HAP-1 (cell line): ENCODE measurements at regions of chr14 and their contacts with region 1.

Region 1: DNA sequence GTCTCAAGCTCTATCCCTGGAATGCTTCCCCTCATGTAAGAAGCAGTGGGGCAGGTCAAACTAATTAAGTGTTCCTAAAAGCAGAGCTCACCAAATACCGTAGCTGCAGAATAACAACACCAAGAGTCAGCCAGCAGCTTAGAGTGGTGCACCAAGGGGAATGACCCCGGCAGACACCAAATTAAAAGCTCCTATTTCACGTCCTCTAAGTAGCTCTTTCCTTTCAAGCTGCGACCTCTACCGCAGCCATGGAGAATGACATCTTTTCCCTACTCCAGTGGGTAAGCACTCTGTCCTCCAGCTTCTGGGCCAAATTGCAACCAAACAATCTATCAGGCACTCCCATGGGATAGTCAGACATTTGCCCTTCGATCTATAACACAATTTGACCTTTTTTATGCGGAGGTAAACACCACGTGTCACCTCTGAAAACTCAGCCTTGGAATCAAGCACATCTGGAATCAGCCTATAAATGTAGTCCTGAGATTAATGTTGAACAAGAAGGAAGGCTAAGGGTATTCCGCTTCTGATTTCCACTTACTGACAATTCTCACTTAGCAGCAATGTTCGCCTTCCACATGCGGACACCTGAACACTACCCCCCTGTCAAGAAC is 67.6 kb upstream of the CDKN3 start:
- DNase-seq: peak; percentile 68 to 78
- H3K4me3 ChIP-seq: no peak overlapping the region
- H3K4me1 ChIP-seq: peaks cover 4% of the 10 kb centered on the region
- H3K27me3 ChIP-seq: peaks cover 6% of the 10 kb centered on the region

Region 2: DNA sequence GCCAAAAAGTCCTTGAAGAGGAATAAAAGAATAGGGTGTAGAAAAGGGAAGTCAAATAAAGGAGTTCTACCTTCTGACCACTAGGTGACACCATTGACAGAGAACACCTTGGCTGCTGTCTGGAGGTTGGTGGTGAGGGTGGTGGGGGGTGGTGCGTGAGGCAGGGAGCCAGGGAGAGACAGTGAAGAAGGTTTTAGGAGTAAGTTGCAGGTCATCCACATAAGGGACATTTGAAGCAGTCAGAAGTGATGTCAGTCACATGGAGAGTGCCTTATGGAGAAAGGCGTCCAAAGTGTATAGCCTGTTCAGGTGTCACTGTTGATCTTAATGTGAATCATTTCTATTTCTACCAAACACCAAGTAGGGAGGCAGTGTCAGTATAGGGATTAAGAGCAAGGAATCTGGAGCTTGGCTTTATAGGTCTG is 896.8 kb before region 1 on chr14:
- in situ Hi-C with region 1: loop called (anchors 25 kb)
- DNase-seq: peak; percentile 40 to 49
- H3K4me3 ChIP-seq: no peak overlapping the region
- H3K4me1 ChIP-seq: no peaks in the 10 kb centered on the region
- H3K27me3 ChIP-seq: peaks cover 11% of the 10 kb centered on the region; the same call in 1 of the 2 replicates

Region 3: GRCh38 chr14:53539489-53540126 is 789.6 kb before region 1 on chr14:
- in situ Hi-C with region 1: loop called (anchors 25 kb)
- DNase-seq: peak; percentile 61 to 85
- H3K4me3 ChIP-seq: no peak overlapping the region
- H3K4me1 ChIP-seq: no peaks in the 10 kb centered on the region
- H3K27me3 ChIP-seq: no peaks in the 10 kb centered on the region

Region 4: GRCh38 chr14:54108481-54109471 is 220.4 kb before region 1 on chr14:
- in situ Hi-C with region 1: no loop called
- DNase-seq: no peak
- H3K4me3 ChIP-seq: no peak overlapping the region
- H3K4me1 ChIP-seq: no peaks in the 10 kb centered on the region
- H3K27me3 ChIP-seq: peaks cover 4% of the 10 kb centered on the region; the same call in 1 of the 2 replicates

Region 5: GRCh38 chr14:54411371-54411770 is 82.2 kb after region 1 on chr14:
- in situ Hi-C with region 1: no loop called
- DNase-seq: no peak
- H3K4me3 ChIP-seq: no peak overlapping the region
- H3K4me1 ChIP-seq: no peaks in the 10 kb centered on the region
- H3K27me3 ChIP-seq: no peaks in the 10 kb centered on the region